GM13976 (cell line): ENCODE measurements at regions of chr12 and their contacts with region 1.

Region 1: GRCh38 chr12:104371043-104371870 is 67.7 kb downstream of the EID3 start:
- DNase-seq: no peak
- CTCF ChIP-seq: no peak

Region 2: DNA sequence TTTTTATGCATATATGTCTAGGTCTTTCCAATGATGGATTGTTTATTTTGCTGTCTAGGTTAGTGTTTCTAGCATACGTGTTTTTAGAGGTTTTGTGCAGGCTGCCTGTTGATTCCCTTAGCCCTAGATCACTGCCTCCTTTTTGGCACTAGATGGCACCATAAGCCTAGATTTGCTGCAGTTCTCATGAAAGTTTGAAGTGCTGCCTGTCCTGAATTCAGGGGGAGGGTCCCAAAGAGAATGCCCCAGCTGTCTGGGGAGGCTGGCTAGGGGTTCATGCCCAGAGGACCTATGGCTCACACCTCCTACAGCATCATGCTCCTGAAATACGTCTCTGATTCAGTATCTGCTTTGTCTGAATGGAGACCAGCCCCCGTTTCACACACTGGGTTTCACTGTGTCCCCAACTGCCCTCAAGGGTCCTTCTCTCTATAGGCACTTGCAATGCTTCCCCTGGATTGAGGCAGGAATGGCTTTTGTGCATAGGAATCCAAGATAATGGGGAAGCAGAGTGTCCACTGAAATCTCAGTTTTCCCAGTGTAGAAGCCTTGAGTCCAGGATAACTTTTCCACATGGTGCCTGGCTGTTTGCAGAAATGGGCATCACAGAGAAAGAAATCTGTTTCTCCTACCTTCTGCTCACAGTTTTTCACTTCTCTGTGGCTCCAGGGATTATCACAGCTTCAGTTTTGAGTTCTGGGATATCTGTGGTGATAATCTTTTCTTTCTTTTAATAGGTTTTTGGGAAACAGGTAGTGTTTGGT is 169.8 kb before region 1 on chr12:
- in situ Hi-C with region 1: loop called (anchors 5 kb)
- DNase-seq: peak; percentile 66
- CTCF ChIP-seq: peak; percentile 88

Region 3: GRCh38 chr12:105067511-105068031 is 696.3 kb after region 1 on chr12:
- in situ Hi-C with region 1: loop called (anchors 10 kb)
- DNase-seq: no peak
- CTCF ChIP-seq: no peak